MCF 10A (cell line): ENCODE measurements at regions of chr17 and their contacts with region 1.

Region 1: GRCh38 chr17:28951991-28952975 is 965 bp upstream of the PHF12 start:
- DNase-seq: peak; percentile 100
- H3K4me3 Mint-ChIP-seq: no peak overlapping the region
- H3K27ac Mint-ChIP-seq: no peak overlapping the region
- H3K4me1 Mint-ChIP-seq: peaks cover 6% of the 10 kb centered on the region
- H3K27me3 Mint-ChIP-seq: no peaks in the 10 kb centered on the region
- CTCF ChIP-seq: no peak

Region 2: GRCh38 chr17:28661635-28662537 is 290.4 kb before region 1 on chr17 and contains the starts of genes SDF2 and SUPT6H:
- CTCF ChIA-PET with region 1: no interaction called
- POLR2A ChIA-PET with region 1: interaction called, 13 read pairs
- intact Hi-C with region 1: no loop called
- DNase-seq: peak; percentile 86
- H3K4me3 Mint-ChIP-seq: peak within 1 kb of the TSS; percentile 88
- H3K27ac Mint-ChIP-seq: peak within 1 kb of the TSS; percentile 96
- H3K4me1 Mint-ChIP-seq: peaks cover 46% of the 10 kb centered on the region
- H3K27me3 Mint-ChIP-seq: no peaks in the 10 kb centered on the region
- CTCF ChIP-seq: no peak
- total RNA-seq, gene SDF2: 31.4 and 31.8 TPM in 2 replicates
- total RNA-seq, gene SUPT6H: 81.7 and 86.4 TPM in 2 replicates

Region 3: GRCh38 chr17:28750178-28751047 is 201.9 kb before region 1 on chr17:
- CTCF ChIA-PET with region 1: interaction called, 3 read pairs
- POLR2A ChIA-PET with region 1: interaction called, 20 read pairs
- intact Hi-C with region 1: no loop called
- DNase-seq: peak; percentile 94
- H3K4me3 Mint-ChIP-seq: no peak overlapping the region
- H3K27ac Mint-ChIP-seq: no peak overlapping the region
- H3K4me1 Mint-ChIP-seq: peaks cover 13% of the 10 kb centered on the region
- H3K27me3 Mint-ChIP-seq: no peaks in the 10 kb centered on the region
- CTCF ChIP-seq: peak; percentile 99

Region 4: DNA sequence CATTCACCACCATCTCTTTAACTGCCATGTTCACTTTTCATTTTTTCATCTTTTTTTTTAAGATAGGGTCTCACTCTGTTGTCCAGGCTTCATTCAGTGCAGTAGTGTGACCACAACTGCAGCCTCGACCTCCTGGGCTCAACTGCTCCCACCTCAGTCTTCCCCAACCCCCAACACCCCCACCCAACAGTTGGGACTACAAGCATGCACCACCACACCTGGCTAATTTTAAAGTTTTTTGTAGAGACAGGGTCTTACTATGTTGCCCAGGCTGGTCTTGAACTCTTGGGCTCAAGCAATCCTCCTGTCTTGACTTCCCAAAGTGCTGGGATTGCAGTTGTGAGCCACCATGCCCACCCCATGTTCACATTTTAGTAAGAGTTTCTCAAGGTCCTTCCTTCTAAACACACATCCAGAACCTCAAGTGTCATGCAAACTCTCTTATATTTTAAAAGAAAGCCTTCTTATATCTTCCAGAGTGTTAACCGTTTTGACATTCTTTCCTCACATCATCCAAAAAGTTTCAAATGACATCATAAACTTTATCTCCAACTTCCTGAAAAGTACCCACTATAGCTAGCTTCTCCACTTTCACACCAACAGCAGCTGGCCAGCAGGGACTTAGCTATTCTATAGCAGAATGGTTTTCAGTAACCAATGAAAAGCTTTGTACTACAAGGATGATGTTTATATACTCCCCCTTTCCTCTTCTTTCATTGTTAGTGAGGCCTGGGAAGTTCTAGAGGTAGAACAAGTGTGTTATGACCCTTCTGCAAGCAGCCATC is 159.2 kb before region 1 on chr17:
- CTCF ChIA-PET with region 1: no interaction called
- POLR2A ChIA-PET with region 1: no interaction called
- intact Hi-C with region 1: no loop called
- DNase-seq: no peak
- H3K4me3 Mint-ChIP-seq: no peak overlapping the region
- H3K27ac Mint-ChIP-seq: peak overlapping the region; percentile 46
- H3K4me1 Mint-ChIP-seq: peaks cover 6% of the 10 kb centered on the region
- H3K27me3 Mint-ChIP-seq: no peaks in the 10 kb centered on the region
- CTCF ChIP-seq: no peak

Region 5: GRCh38 chr17:28896884-28897768 is 55.2 kb before region 1 on chr17 and contains the start of gene FLOT2:
- CTCF ChIA-PET with region 1: interaction called, 7 read pairs
- POLR2A ChIA-PET with region 1: interaction called, 24 read pairs
- intact Hi-C with region 1: loop called (anchors 2 kb)
- DNase-seq: peak; percentile 96
- H3K4me3 Mint-ChIP-seq: peak within 1 kb of the TSS; percentile 90
- H3K27ac Mint-ChIP-seq: peak within 1 kb of the TSS; percentile 93
- H3K4me1 Mint-ChIP-seq: peaks cover 26% of the 10 kb centered on the region
- H3K27me3 Mint-ChIP-seq: no peaks in the 10 kb centered on the region
- CTCF ChIP-seq: peak; percentile 5
- total RNA-seq, gene FLOT2: 98.5 and 126 TPM in 2 replicates

Region 6: DNA sequence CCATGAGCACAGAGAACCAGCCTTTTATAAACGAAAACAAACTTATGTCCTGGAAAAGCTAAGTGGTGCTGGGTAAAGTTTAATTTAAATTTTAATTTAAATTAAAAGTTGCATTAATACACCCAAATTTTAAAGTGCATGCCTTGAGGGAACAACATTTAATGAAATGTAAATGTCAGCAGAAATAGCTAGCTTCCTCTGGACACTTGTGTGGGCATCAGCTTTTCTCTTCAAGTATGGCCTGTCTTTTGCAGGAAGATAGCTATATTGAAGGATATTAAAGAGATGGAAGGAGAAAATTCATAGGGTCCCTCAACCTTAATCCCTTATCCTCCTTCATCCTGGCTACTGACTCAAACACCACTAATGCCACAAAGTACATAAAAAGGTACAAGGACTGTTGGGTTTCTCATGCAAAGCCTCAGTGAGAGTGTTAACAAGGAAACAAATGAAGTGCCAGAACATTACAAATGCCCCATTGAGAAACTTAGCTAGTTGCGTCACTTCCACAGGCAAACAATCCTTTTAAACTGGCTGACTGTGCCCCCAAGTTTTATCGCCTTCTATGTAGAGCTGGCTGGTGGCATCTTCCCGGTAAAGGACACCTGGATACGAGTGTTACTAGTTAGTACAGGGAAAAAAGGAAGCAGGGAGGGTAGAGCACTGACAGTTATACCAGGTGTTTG is 15.1 kb before region 1 on chr17:
- CTCF ChIA-PET with region 1: interaction called, 7 read pairs
- POLR2A ChIA-PET with region 1: interaction called, 130 read pairs
- intact Hi-C with region 1: no loop called
- DNase-seq: peak; percentile 79
- H3K4me3 Mint-ChIP-seq: no peak overlapping the region
- H3K27ac Mint-ChIP-seq: peak overlapping the region; percentile 39
- H3K4me1 Mint-ChIP-seq: peaks cover 16% of the 10 kb centered on the region
- H3K27me3 Mint-ChIP-seq: no peaks in the 10 kb centered on the region
- CTCF ChIP-seq: no peak

Region 7: GRCh38 chr17:29180034-29180787 is 227.9 kb after region 1 on chr17 and contains the start of gene MYO18A:
- CTCF ChIA-PET with region 1: no interaction called
- POLR2A ChIA-PET with region 1: interaction called, 10 read pairs
- intact Hi-C with region 1: no loop called
- DNase-seq: peak; percentile 76
- H3K4me3 Mint-ChIP-seq: peak within 1 kb of the TSS; percentile 81
- H3K27ac Mint-ChIP-seq: peak within 1 kb of the TSS; percentile 93
- H3K4me1 Mint-ChIP-seq: peaks cover 34% of the 10 kb centered on the region
- H3K27me3 Mint-ChIP-seq: no peaks in the 10 kb centered on the region
- CTCF ChIP-seq: peak; percentile 76
- total RNA-seq, gene MYO18A: 24.0 and 24.8 TPM in 2 replicates